Activated CD8-positive, alpha-beta T cell treated with anti-CD3 and anti-CD28 coated beads, Interleukin-2, amount 10 ng/mL, durations not matched to agents 7 days and 5 days (primary cell): ENCODE measurements at regions of chr3 and their contacts with region 1.

Region 1: GRCh38 chr3:48439820-48440589 is at the starts of genes CCDC51 and TMA7:
- DNase-seq: peak; percentile 99
- ATAC-seq: peak; percentile 96
- H3K4me3 Mint-ChIP-seq: peak within 1 kb of the TSS; percentile 97
- H3K27ac Mint-ChIP-seq: peak within 1 kb of the TSS; percentile 96
- H3K4me1 Mint-ChIP-seq: peaks cover 34% of the 10 kb centered on the region
- H3K27me3 Mint-ChIP-seq: no peaks in the 10 kb centered on the region
- total RNA-seq, gene CCDC51: 16.3 to 16.5 TPM
- total RNA-seq, gene TMA7: 339 to 364 TPM

Region 2: DNA sequence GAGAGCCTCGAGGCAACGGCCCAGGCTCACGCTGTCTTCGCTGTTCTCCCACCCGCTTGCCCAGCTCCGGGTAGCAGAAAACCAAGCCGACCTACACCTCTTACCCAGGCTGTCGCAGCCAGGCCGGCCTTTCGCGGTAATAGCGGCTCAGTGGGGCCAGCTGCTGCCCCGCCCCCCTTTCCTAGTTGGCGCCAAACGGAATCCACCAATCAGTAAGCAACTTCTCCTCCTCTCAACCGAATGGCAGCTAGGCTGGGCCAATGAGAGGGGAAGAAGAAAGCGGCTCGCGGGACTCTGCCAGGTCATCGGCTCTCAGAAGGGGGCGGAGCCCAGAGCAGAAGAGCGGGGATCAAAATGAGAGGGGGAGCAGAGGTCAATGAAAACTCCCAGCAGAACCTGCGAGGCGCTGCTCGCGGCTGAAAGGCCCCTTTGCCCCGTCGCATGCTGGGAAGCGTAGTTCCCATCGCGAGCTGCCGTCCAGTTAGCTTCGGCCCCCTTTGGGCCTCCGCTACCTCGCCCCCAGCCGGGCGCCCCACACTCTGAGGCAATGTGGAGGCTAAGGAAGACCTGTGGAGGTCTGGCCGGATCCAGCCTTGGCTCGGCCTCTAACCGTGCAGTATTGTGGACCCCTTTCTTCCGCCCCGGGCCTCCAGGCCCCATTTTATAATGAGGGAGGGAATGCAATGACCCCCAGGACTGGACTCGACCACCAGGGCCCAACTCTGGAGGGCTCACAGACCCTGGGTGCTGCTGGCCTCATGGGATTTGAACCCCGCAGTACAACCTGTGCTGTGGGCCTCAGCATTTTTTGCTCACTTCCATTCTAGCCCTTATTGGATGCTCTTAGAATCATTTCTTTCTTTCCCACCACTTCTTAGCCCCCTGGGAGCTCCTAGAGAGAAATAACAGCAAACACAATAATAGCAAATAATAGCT is 251.5 kb before region 1 on chr3 and contains the start of gene CDC25A:
- CTCF ChIA-PET with region 1: interaction called, 31 read pairs
- POLR2A ChIA-PET with region 1: interaction called, 3 read pairs
- DNase-seq: peak; percentile 99
- ATAC-seq: peak; percentile 99
- H3K4me3 Mint-ChIP-seq: peak within 1 kb of the TSS; percentile 91
- H3K27ac Mint-ChIP-seq: peak within 1 kb of the TSS; percentile 87
- H3K4me1 Mint-ChIP-seq: peaks cover 33% of the 10 kb centered on the region
- H3K27me3 Mint-ChIP-seq: no peaks in the 10 kb centered on the region
- total RNA-seq, gene CDC25A: 30.3 to 31.3 TPM

Region 3: GRCh38 chr3:48247401-48247811 is 192.6 kb before region 1 on chr3:
- CTCF ChIA-PET with region 1: interaction called, 49 read pairs
- POLR2A ChIA-PET with region 1: interaction called, 4 read pairs
- DNase-seq: peak; percentile 30
- ATAC-seq: peak; percentile 61
- H3K4me3 Mint-ChIP-seq: no peak overlapping the region
- H3K27ac Mint-ChIP-seq: peak overlapping the region; percentile 79
- H3K4me1 Mint-ChIP-seq: peaks cover 39% of the 10 kb centered on the region
- H3K27me3 Mint-ChIP-seq: no peaks in the 10 kb centered on the region

Region 4: GRCh38 chr3:48318783-48319468 is 121.1 kb before region 1 on chr3:
- CTCF ChIA-PET with region 1: interaction called, 10 read pairs
- POLR2A ChIA-PET with region 1: no interaction called
- DNase-seq: no peak
- ATAC-seq: no peak
- H3K4me3 Mint-ChIP-seq: no peak overlapping the region
- H3K27ac Mint-ChIP-seq: no peak overlapping the region
- H3K4me1 Mint-ChIP-seq: peaks cover 8% of the 10 kb centered on the region
- H3K27me3 Mint-ChIP-seq: peaks cover 6% of the 10 kb centered on the region

Region 5: DNA sequence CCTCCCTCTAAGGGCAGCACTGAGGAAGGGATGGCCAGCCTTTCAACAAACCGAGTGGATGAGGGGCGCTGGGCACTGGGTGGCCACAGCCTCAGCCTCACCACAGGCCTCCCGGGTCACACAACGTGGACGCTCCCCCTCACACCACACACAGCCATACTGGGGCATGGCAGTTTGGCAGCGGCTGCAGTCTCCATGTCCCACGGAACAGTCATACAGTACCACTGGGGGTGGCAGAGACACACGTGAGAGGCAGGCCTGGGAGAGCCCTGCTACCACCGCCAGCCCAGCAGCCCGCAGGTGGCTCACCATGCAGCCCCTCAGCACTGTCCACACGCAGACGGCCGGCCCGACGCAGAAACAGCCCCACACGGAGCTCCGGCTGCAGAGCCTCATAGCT is 21.9 kb before region 1 on chr3:
- CTCF ChIA-PET with region 1: interaction called, 59 read pairs
- POLR2A ChIA-PET with region 1: interaction called, 3 read pairs
- DNase-seq: no peak
- ATAC-seq: no peak
- H3K4me3 Mint-ChIP-seq: no peak overlapping the region
- H3K27ac Mint-ChIP-seq: no peak overlapping the region
- H3K4me1 Mint-ChIP-seq: peaks cover 4% of the 10 kb centered on the region
- H3K27me3 Mint-ChIP-seq: no peaks in the 10 kb centered on the region

Region 6: DNA sequence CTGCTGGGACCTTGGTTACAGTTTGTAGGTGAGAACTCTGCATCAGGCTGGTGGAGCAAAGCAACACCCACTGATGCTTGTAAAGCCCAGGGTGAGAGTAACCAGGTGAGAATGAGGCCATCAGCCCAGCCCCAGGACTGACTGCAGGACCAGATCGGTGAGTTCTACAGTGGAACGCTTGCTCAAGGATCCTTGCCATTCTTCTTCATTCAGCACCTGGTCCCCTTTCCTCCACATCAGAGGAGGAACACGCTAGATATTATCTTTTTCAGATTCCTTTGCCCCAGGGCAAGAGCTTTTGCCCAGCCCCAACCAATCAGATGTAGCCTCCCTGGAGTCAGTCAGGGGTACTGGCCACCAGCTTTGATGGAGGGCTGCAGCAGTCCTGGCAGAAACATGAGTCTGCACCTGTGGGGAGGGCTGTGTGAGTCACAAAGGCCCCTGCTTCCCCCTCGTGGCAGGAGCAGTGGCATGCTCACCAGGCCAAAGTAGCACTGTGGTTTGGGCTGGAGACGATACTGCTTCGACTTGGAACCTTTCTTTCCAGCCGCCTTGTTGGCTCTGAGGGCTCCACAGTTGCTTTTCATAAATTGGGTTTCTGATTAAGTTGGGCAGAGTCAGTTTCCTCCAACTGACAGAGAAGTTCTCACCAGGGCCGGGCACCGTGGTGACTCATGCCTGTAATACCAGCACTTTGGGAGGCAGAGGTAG is 67.5 kb after region 1 on chr3:
- CTCF ChIA-PET with region 1: interaction called, 117 read pairs
- POLR2A ChIA-PET with region 1: interaction called, 9 read pairs
- DNase-seq: peak; percentile 86
- ATAC-seq: peak; percentile 87
- H3K4me3 Mint-ChIP-seq: no peak overlapping the region
- H3K27ac Mint-ChIP-seq: peak overlapping the region; percentile 81
- H3K4me1 Mint-ChIP-seq: peaks cover 53% of the 10 kb centered on the region
- H3K27me3 Mint-ChIP-seq: peaks cover 6% of the 10 kb centered on the region

Region 7: GRCh38 chr3:48595526-48596121 is 155.6 kb after region 1 on chr3:
- CTCF ChIA-PET with region 1: no interaction called
- POLR2A ChIA-PET with region 1: no interaction called
- DNase-seq: no peak
- ATAC-seq: no peak
- H3K4me3 Mint-ChIP-seq: no peak overlapping the region
- H3K27ac Mint-ChIP-seq: no peak overlapping the region
- H3K4me1 Mint-ChIP-seq: peaks cover 2% of the 10 kb centered on the region
- H3K27me3 Mint-ChIP-seq: peaks cover 20% of the 10 kb centered on the region

Region 8: DNA sequence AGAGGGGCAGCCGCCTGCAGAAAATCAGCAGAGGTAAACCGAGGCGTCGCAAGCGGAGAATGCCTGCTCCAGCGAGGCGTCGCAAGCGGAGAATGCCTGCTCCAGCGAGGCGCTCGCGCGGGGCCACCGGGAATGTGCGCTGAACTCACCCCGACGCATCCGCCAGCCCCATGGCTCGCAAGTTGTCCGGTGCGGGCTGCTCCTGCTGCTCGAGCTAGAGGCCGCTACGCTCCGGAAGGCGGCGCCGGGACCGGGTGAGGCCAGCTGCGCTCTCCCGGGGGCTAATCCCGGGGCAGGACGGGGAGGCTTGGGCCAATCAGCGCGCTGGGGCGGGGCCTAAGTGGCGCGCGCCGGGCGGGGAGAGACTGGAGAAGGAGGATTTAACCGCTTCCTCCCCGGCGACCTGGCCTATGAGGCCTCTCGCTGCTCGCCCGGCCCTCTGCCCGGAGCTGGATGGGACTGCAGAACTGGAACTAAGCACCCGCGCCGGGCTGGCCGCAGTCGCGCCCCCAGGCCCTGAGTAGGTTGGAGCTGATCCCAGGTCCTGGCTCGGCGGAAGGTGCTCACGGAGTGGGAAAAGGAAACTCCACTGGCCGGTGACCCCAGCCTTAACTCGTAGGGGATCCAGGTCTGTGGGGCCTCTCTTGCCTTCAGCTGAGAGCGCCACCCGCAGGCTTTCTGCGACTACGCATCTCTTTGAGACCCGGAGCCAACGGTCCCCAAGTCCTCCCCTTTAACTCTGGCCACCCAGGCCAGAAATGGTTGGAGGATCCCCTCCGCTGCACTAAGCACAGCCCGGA is 195.4 kb after region 1 on chr3 and contains the start of gene SLC26A6:
- CTCF ChIA-PET with region 1: interaction called, 21 read pairs
- POLR2A ChIA-PET with region 1: no interaction called
- DNase-seq: peak; percentile 95
- ATAC-seq: peak; percentile 97
- H3K4me3 Mint-ChIP-seq: peak within 1 kb of the TSS; percentile 89
- H3K27ac Mint-ChIP-seq: peak within 1 kb of the TSS; percentile 87
- H3K4me1 Mint-ChIP-seq: peaks cover 30% of the 10 kb centered on the region
- H3K27me3 Mint-ChIP-seq: no peaks in the 10 kb centered on the region
- total RNA-seq, gene SLC26A6: 58.0 to 61.5 TPM